ENCODE measurements at regions of chr11 and their contacts with region 1.

Region 1: DNA sequence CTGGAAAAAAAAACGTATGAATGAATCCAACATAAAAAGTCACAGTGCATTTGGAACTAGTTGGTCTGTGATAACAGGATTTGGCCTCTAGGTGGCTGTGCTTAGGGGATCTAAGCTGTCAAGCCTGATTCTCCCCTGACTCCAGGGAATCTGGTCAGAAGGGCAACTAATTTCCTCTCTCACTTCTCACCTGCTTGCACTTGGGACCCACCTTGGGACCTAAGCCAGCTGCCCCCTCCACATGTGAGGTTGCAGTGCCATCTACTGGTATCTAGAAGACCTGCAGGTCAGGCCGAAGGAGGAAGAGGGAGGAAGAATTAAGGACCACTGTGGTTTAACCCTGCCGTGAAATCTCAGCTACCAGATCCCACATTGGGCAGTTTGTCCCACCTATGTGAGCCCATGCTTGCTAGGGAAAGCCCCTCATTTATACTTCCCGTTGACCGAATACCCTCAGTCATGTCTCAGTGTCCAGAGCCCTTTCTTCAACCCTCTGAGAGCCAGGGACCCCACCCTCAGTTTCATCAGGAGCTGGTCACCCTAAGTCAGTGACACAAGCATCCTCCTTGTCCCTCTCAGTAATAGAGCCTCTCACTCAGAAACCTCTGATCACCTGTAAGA is 33.2 kb upstream of the CAVIN3 start:
- DNase-seq: peak; percentile 82
- ATAC-seq: peak; percentile 99
- H3K4me3 Mint-ChIP-seq: no peak overlapping the region
- H3K27ac Mint-ChIP-seq: no peak overlapping the region
- H3K4me1 Mint-ChIP-seq: peaks cover 5% of the 10 kb centered on the region
- H3K27me3 Mint-ChIP-seq: no peaks in the 10 kb centered on the region
- CTCF ChIP-seq: peak; percentile 97

Region 2: DNA sequence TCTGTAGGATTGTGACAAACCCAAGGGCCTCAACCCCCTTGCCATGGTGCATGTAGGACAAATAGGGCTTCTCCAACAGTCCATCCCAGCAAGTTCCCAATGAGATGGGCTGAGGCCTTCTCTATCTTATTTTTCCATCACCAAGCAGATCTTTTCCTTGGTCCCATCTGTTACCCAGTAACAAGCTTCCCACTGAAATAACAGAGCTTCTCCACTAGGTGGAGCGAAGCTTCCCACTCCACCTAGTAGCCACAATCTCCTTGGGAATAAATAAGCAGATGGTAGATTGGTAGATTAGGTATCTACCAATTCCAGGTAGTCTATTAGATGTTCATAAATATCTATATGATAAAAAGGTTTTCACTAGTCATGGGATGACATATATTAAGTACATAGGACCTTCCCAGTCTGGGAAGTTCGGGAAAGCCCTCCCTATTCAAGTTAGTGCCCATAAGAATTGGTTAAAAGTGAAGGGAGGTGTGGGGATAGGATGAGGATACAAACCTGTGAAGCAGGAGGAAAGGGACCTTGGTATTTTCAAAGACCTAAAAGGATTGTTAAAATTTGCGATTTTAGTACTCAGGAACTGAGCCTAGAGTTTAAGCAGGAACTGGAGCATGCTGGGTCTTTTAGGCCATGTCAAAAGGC is 360.7 kb before region 1 on chr11:
- CTCF ChIA-PET with region 1: interaction called, 11 read pairs
- POLR2A ChIA-PET with region 1: no interaction called
- DNase-seq: no peak
- ATAC-seq: peak; percentile 91
- H3K4me3 Mint-ChIP-seq: no peak overlapping the region
- H3K27ac Mint-ChIP-seq: no peak overlapping the region
- H3K4me1 Mint-ChIP-seq: 0 out of 2 replicates have a peak, but pooled peaks cover 3% of the 10 kb centered on the region
- H3K27me3 Mint-ChIP-seq: no peaks in the 10 kb centered on the region; the same call in 1 of the 2 replicates
- CTCF ChIP-seq: peak; percentile 56

Region 3: DNA sequence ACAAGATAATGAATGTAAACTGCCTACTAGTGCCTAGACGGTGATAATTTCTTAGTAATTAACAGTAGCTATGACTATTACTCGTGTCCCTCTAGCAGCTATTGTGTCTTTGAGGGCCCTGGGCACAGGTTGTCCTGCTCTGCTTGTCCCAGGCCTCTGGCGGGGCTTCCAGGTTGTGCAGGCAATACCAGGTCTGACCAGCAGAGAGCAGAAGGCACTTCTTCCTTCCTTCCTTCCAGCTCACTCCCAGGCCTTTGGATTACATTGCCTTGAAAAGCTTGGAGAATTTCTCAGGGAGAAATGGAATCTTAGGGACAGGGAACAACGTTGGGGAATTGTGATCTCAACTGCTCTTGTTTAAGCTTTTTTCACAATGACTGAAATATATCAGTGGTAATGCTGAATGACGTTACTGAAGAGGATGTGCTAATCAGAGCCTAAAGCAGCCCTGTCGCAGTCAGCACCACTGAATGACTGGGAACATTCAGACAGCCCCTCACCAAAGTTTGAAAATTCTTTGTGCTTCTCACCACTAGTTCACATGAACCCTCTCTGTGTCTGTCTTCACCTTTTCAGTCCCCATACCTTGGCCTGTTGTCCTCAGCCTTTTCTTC is 102.2 kb before region 1 on chr11:
- CTCF ChIA-PET with region 1: interaction called, 139 read pairs
- POLR2A ChIA-PET with region 1: no interaction called
- DNase-seq: peak; percentile 89
- ATAC-seq: peak; percentile 99
- H3K4me3 Mint-ChIP-seq: no peak overlapping the region
- H3K27ac Mint-ChIP-seq: no peak overlapping the region
- H3K4me1 Mint-ChIP-seq: peaks cover 8% of the 10 kb centered on the region
- H3K27me3 Mint-ChIP-seq: peaks cover 4% of the 10 kb centered on the region
- CTCF ChIP-seq: peak; percentile 80

Region 4: DNA sequence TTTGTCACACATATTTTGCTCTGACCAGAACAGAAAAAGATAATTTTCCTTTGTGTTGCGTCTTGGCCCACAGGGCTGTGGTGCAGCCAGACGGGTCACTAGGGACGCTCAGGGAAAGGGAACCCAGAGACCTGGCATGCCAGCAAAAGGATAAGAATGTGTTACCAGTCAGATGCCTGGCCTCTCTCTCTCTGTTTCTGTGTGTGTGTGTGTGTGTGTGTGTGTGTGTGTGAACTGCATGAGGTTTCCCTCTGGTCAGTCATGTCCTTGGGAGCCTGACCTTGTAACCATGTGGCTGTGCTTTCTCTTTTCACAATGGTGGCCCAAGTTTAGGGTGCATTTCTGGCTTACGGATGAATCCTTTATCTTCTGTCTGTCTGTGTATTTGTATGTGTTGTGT is 68.5 kb before region 1 on chr11:
- CTCF ChIA-PET with region 1: interaction called, 22 read pairs
- POLR2A ChIA-PET with region 1: no interaction called
- DNase-seq: no peak
- ATAC-seq: no peak
- H3K4me3 Mint-ChIP-seq: no peak overlapping the region
- H3K27ac Mint-ChIP-seq: no peak overlapping the region
- H3K4me1 Mint-ChIP-seq: peaks cover 31% of the 10 kb centered on the region
- H3K27me3 Mint-ChIP-seq: peaks cover 98% of the 10 kb centered on the region
- CTCF ChIP-seq: no peak

Region 5: DNA sequence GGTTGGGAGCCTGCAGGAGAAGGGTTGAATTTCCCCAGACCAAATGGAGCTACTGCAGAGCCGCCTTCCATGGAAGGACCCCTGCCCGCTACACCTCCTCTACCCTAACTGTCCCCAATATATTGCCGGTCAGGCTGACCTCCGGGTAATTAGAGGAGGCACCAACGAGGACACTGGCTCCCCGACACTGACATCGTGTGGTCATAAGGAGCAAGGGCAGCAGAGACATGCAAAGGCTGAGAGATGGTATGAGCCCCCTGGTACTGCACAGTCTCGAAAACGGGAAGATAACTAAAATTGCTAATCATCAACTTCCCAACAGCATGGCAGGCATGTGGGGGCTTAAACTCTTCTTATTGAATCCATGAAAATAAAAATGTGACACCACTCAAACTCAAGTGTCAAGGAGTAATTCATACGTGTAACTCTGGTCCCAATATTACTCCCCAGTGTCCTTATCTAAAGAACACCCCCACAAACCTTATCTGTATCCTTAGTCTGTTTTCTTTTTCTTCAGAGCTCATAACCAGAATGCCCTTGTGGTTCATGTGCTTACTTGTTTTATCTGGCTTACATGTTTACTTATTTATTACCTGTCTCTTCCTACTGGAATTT is 37.6 kb before region 1 on chr11:
- CTCF ChIA-PET with region 1: interaction called, 90 read pairs
- POLR2A ChIA-PET with region 1: interaction called, 8 read pairs
- DNase-seq: peak; percentile 68
- ATAC-seq: peak; percentile 65
- H3K4me3 Mint-ChIP-seq: no peak overlapping the region
- H3K27ac Mint-ChIP-seq: no peak overlapping the region
- H3K4me1 Mint-ChIP-seq: peaks cover 22% of the 10 kb centered on the region
- H3K27me3 Mint-ChIP-seq: peaks cover 9% of the 10 kb centered on the region
- CTCF ChIP-seq: peak; percentile 69

Region 6: GRCh38 chr11:6333112-6333511 is 20.4 kb before region 1 on chr11:
- CTCF ChIA-PET with region 1: interaction called, 11 read pairs
- POLR2A ChIA-PET with region 1: no interaction called
- DNase-seq: no peak
- ATAC-seq: no peak
- H3K4me3 Mint-ChIP-seq: no peak overlapping the region
- H3K27ac Mint-ChIP-seq: no peak overlapping the region
- H3K4me1 Mint-ChIP-seq: peaks cover 18% of the 10 kb centered on the region
- H3K27me3 Mint-ChIP-seq: no peaks in the 10 kb centered on the region
- CTCF ChIP-seq: no peak

Measured in WTC11 (cell line).